ENCODE measurements at regions of chr2 and their contacts with region 1.

Region 1: GRCh38 chr2:215828517-215829184 is 184.7 kb downstream of the MREG start:
- DNase-seq: peak in 1 of 2 donors; percentile 72
- H3K4me3 ChIP-seq: no peak overlapping the region
- H3K27ac ChIP-seq: peak overlapping the region in 1 of 2 donors; percentile 30
- H3K4me1 ChIP-seq: peaks cover 8 to 19% of the 10 kb centered on the region in 2 donors
- H3K27me3 ChIP-seq: no peaks in the 10 kb centered on the region
- CTCF ChIP-seq: peak; percentile 23 to 57 (median 41)

Region 2: DNA sequence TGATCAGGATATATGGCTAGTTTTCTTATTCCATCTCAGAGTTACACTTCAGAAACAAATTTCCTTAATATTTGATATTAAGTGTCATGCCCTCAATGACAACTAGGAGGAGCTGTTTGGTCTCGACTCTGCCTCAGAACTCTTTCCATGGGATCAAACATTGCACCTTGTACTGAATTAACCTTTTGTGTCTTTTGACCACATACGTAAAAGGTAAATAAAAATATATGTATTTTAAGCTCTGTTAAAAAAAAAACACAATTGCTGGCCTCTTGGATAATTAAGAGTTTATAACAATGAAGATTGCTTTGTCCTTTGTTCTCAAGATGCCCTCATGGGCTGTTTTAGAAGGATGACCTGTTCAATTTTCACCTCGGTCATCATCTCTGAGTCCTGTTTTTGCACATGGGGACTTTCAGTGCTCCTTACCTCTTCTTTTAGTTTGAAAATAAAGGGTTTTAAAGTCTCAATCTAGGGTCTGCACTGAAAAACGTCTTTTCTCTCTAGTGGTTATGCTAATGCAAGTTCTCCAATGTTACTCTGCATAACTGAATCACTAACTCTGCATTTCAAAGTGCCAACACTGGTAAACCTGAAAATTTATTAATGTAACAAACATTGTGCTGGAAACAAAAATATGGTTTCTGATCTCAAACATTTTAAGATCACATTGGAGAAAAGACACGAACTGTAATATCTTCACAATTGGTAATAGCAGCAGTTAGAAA is 374.0 kb before region 1 on chr2:
- intact Hi-C with region 1: loop called (anchors 2 kb)
- DNase-seq: no peak
- H3K4me3 ChIP-seq: no peak overlapping the region
- H3K27ac ChIP-seq: no peak overlapping the region
- H3K4me1 ChIP-seq: peaks cover 4 to 5% of the 10 kb centered on the region in 2 donors
- H3K27me3 ChIP-seq: no peaks in the 10 kb centered on the region
- CTCF ChIP-seq: peak; percentile 65 to 81 (median 80)

Region 3: GRCh38 chr2:215601990-215602721 is 226.5 kb before region 1 on chr2:
- intact Hi-C with region 1: loop called (anchors 5 kb)
- DNase-seq: no peak
- H3K4me3 ChIP-seq: no peak overlapping the region
- H3K27ac ChIP-seq: peak overlapping the region in 1 of 2 donors; percentile 51
- H3K4me1 ChIP-seq: peaks cover 4 to 6% of the 10 kb centered on the region in 2 donors
- H3K27me3 ChIP-seq: no peaks in the 10 kb centered on the region
- CTCF ChIP-seq: no peak

Region 4: DNA sequence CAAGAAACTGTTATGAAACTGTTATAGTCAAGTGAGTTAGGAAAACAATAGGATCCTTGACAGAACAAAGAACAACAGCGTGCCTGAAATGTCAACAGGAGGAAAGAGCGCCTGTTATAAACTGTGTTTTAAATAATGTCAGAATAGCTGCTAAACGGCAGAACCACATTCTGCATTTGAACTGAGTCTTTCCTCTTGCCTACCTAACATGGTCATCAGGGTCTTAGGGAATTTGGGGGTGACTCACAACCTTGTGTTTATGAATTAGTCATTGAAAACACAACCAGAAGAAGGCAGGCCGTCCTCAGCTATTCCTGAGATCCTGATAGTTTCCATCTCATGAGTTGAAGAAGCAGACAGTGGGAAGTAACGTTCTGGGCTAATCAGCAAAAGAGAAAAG is 170.8 kb before region 1 on chr2:
- intact Hi-C with region 1: no loop called
- DNase-seq: peak in 1 of 2 donors; percentile 78
- H3K4me3 ChIP-seq: no peak overlapping the region
- H3K27ac ChIP-seq: peak overlapping the region; percentile 76 to 80
- H3K4me1 ChIP-seq: peaks cover 3 to 31% of the 10 kb centered on the region in 2 donors
- H3K27me3 ChIP-seq: no peaks in the 10 kb centered on the region
- CTCF ChIP-seq: no peak

Region 5: DNA sequence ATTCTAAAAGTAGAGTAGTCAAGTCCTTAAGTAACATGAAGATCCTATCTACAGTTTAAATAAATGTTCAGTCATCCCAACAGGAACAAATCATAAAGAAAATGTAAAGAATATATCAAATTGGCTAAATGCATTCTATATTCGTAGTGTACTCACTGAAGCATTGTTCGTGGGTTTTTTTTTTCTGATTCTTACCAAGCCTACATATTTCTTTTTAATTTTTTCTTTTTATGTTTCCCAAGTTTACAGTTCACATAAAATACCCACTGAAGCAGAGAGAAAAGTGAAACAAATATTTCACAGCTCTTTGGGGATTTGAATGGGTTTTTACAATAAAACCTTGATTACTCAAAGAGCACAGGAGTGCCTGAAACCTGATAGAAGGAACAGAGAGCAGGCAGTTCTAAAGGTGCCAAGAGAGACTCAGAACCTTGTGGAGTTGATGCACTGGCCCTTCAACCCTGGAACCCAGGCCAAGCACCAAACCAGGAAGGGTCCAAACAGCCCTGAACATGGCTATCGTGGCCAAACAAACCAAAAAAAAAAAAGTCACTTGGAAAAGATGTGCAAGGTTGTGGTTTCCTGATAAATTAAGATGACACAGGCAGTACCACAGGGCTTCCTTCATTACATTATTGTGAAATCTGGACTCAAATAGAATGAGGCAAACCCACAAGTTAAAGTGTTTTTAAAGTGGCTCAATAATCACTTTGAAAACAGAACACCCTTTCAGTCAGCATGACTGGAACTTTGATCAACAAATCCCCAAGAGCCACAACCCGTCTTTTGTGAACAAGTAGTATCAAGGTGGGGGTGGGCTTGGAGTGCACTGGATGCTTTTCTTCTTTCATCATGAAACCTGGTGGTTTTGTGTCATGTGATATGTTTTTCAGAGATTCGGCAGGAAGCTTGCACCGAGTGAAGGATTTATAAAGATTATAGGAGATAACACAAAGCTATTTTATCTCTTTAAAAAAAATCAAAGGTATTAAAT is 147.7 kb before region 1 on chr2:
- intact Hi-C with region 1: no loop called
- DNase-seq: no peak
- H3K4me3 ChIP-seq: no peak overlapping the region
- H3K27ac ChIP-seq: no peak overlapping the region
- H3K4me1 ChIP-seq: no peaks in the 10 kb centered on the region
- H3K27me3 ChIP-seq: no peaks in the 10 kb centered on the region
- CTCF ChIP-seq: no peak

Region 6: DNA sequence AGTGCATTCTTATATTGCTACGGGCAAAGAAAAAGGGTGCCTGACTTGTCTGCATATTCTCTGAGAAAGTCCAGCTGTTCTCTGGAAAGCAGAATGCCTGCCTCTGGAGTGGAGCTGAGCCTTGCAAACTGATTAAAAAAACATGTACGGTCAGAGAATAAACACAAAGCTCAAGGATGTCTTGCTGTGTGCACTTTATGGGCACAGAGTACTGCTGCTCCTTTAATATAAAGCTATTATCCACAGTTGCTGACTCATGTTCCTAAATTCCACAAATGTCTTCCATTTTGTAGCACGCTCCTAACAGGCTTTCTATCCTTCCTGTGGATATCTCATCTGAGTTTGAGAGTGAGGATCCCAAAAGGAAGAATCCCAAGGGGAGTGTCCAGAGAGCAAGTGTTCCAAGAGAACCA is 44.3 kb before region 1 on chr2:
- intact Hi-C with region 1: no loop called
- DNase-seq: no peak
- H3K4me3 ChIP-seq: no peak overlapping the region
- H3K27ac ChIP-seq: peak overlapping the region; percentile 1 to 44
- H3K4me1 ChIP-seq: peaks cover 0 to 6% of the 10 kb centered on the region in 2 donors
- H3K27me3 ChIP-seq: no peaks in the 10 kb centered on the region
- CTCF ChIP-seq: no peak

Measured in ascending aorta (tissue), 2 donors.